ENCODE measurements at regions of chr18 and their contacts with region 1.

Region 1: GRCh38 chr18:21897811-21898210 is 157.2 kb downstream of the MIB1 start:
- DNase-seq: peak; percentile 56
- ATAC-seq: peak; percentile 85
- H3K4me3 ChIP-seq: no peak overlapping the region
- H3K27ac ChIP-seq: no peak overlapping the region
- H3K4me1 ChIP-seq: peaks cover 22% of the 10 kb centered on the region
- H3K27me3 ChIP-seq: 0 out of 5 replicates have a peak, but pooled peaks cover 0 to 1% of the 10 kb centered on the region in 2 experiments
- CTCF ChIP-seq: peak; percentile 81
- EP300 ChIP-seq: no peak
- POLR2A ChIP-seq: no peak
- RAD21 ChIP-seq: peak; percentile 45

Region 2: DNA sequence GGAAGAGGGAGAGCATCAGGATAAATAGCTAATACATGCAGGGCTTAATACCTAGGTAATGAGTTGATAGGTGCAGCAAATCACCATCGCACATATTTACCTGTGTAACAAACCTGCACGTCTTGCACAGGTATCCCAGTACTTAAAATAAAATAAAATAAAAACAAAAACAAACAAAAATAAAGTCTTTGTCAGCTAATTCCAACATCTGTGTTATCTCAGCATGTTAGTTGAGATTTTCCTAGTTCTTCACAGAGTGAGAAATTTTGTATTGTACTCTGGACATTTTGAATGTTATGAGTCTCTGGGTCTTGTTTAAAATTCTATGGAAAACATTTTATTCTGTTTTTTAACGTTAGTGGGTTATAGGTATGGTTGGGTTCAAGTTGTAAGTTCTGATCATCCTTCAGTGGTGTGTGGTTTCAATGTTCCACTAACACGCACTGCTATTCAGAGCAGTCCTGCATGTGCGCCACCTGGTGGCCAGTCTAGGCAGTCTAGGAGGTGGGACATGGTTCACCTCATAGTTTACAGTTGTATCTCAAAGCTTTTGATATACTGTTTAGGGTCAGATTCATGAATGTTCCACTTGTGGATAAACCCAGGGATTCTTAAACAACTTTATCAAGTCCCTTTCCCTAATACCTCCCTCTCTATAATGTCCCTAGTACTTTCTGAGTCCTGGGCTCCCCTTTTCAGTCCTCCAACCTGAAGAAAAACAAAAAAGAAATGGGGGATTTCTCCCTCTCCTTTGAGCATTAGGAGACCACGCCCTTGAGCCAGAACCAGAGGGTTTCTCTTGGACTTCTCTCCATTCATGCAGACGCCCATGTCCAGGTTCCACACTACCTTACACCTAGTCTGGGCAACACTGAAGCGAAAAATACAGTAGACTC is 58.2 kb after region 1 on chr18:
- CTCF ChIA-PET with region 1: interaction called, 9 read pairs
- POLR2A ChIA-PET with region 1: no interaction called
- in situ Hi-C with region 1: no loop called
- intact Hi-C with region 1: loop called (anchors 5 kb)
- DNase-seq: peak; percentile 54
- ATAC-seq: peak; percentile 98
- H3K4me3 ChIP-seq: no peak overlapping the region
- H3K27ac ChIP-seq: no peak overlapping the region
- H3K4me1 ChIP-seq: peaks cover 15% of the 10 kb centered on the region
- H3K27me3 ChIP-seq: no peaks in the 10 kb centered on the region
- CTCF ChIP-seq: peak; percentile 86
- EP300 ChIP-seq: no peak
- POLR2A ChIP-seq: no peak
- RAD21 ChIP-seq: peak; percentile 46; the same call in 1 of the 2 replicates

Region 3: GRCh38 chr18:23237524-23238151 is 1339.8 kb after region 1 on chr18:
- CTCF ChIA-PET with region 1: no interaction called
- POLR2A ChIA-PET with region 1: no interaction called
- in situ Hi-C with region 1: no loop called
- intact Hi-C with region 1: no loop called
- DNase-seq: no peak
- ATAC-seq: no peak; the same call in 2 of the 3 replicates
- H3K4me3 ChIP-seq: no peak overlapping the region
- H3K27ac ChIP-seq: no peak overlapping the region
- H3K4me1 ChIP-seq: peaks cover 14% of the 10 kb centered on the region
- H3K27me3 ChIP-seq: no peaks in the 10 kb centered on the region
- CTCF ChIP-seq: no peak
- EP300 ChIP-seq: no peak
- POLR2A ChIP-seq: no peak
- RAD21 ChIP-seq: no peak